ENCODE measurements at regions of chr3 and their contacts with region 1.

Region 1: DNA sequence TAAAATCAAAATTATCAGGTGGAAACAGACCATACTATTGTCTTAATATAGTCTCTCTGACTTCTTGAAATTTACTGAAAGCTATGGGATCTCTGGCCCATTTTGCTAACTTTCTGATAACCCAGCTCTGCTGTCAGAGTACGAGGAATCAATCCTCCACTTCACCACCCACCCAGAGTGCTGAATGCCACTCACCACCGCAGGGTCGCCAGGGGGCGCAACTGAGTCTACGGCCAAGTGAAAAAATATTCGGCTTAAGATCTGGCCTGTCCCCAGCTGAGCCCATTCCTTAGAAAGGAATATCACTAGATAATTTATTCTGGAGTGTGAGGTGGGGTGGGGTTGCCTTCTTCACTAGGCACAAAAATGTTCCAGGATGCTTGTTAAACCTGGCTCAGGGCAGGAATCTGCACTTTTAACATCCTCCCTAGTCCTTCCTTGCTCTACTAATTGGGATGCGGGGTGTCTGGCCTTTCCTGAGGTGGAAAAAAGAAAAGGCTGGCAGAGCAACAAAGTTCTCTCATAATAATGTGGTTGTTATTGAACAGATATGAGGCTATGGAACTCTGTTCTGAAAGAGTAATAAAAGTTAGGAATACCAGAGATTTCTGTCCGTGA is 520.6 kb downstream of the MFSD1 start:
- DNase-seq: peak; percentile 83
- ATAC-seq: peak; percentile 99
- H3K4me3 Mint-ChIP-seq: no peak overlapping the region
- H3K27ac Mint-ChIP-seq: no peak overlapping the region
- H3K4me1 Mint-ChIP-seq: no peaks in the 10 kb centered on the region
- H3K27me3 Mint-ChIP-seq: no peaks in the 10 kb centered on the region
- CTCF ChIP-seq: peak; percentile 91

Region 2: GRCh38 chr3:159266779-159267178 is 55.7 kb before region 1 on chr3:
- CTCF ChIA-PET with region 1: interaction called, 12 read pairs
- POLR2A ChIA-PET with region 1: no interaction called
- DNase-seq: peak; percentile 74
- ATAC-seq: peak; percentile 97
- H3K4me3 Mint-ChIP-seq: no peak overlapping the region
- H3K27ac Mint-ChIP-seq: no peak overlapping the region
- H3K4me1 Mint-ChIP-seq: no peaks in the 10 kb centered on the region
- H3K27me3 Mint-ChIP-seq: no peaks in the 10 kb centered on the region
- CTCF ChIP-seq: peak; percentile 60

Region 3: DNA sequence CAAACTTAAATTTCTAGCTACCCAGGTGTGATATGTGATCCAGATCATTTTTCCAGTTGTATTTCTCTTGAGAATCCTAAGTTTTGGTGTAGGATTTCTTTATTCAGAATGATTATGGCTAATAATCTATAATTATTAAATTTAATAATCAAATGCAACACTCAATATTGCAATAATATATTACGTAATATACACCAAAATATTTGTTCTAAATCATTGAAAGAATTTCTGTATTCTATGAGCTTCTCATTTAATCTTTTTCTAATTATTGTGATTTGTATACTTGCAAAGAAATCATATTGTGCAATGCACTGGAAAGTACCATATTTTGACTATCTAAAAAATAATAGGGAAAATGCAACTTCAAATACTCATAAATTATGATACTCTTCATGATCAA is 11.0 kb before region 1 on chr3:
- CTCF ChIA-PET with region 1: interaction called, 26 read pairs
- POLR2A ChIA-PET with region 1: no interaction called
- DNase-seq: no peak
- ATAC-seq: no peak
- H3K4me3 Mint-ChIP-seq: no peak overlapping the region
- H3K27ac Mint-ChIP-seq: no peak overlapping the region
- H3K4me1 Mint-ChIP-seq: no peaks in the 10 kb centered on the region
- H3K27me3 Mint-ChIP-seq: no peaks in the 10 kb centered on the region
- CTCF ChIP-seq: no peak

Region 4: DNA sequence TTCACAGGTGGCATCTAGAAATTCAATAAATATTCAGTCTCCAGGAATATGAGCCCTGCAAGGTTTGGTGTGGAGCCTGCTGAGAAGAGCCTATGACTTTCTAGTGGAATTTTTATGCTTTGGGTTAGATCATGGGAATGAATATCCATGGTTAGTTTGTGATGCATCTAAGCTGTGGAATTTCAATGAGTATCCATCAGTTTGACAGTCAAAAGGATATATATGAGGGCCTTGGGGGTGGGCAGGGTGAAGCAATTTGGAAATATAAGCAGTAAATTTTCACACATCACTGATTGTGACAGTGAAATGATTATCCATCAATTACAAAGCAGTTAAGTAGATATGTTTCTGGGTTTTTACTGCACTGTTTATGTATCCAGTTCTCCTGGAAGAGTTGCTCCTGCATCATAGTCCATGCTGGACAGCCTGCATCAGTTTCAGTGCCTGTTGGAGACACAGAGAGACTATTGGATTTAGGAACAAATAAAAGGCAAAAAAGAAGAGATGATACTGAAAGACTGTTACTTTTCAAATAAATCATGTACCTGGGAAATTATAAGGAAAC is 10.2 kb after region 1 on chr3:
- CTCF ChIA-PET with region 1: interaction called, 14 read pairs
- POLR2A ChIA-PET with region 1: no interaction called
- DNase-seq: no peak
- ATAC-seq: no peak
- H3K4me3 Mint-ChIP-seq: no peak overlapping the region
- H3K27ac Mint-ChIP-seq: no peak overlapping the region
- H3K4me1 Mint-ChIP-seq: no peaks in the 10 kb centered on the region
- H3K27me3 Mint-ChIP-seq: no peaks in the 10 kb centered on the region
- CTCF ChIP-seq: no peak

Region 5: GRCh38 chr3:159443266-159443665 is 120.8 kb after region 1 on chr3:
- CTCF ChIA-PET with region 1: no interaction called
- POLR2A ChIA-PET with region 1: no interaction called
- DNase-seq: no peak
- ATAC-seq: no peak
- H3K4me3 Mint-ChIP-seq: no peak overlapping the region
- H3K27ac Mint-ChIP-seq: no peak overlapping the region
- H3K4me1 Mint-ChIP-seq: no peaks in the 10 kb centered on the region; the same call in 1 of the 2 replicates
- H3K27me3 Mint-ChIP-seq: no peaks in the 10 kb centered on the region; the same call in 1 of the 2 replicates
- CTCF ChIP-seq: no peak

Region 6: DNA sequence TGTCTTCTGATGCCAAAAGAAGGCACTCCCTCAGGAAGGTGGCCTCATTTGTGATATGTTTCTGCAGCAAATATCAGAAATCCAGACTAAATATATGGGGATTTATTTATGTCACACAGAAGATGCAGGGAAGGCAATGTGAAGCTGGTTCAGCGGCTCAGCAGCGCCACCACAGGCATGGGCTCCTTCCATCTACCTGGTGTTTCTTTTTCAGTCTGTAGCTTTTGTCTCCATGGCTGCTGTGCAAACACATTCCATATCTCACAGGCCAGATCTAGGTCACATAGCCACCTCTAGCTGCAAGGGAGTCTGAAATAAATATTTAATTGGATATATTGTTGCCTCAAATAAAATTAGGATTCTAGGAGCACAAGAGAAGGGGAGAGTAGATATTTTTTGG is 164.2 kb after region 1 on chr3:
- CTCF ChIA-PET with region 1: interaction called, 15 read pairs
- POLR2A ChIA-PET with region 1: no interaction called
- DNase-seq: peak; percentile 65
- ATAC-seq: peak; percentile 91
- H3K4me3 Mint-ChIP-seq: no peak overlapping the region
- H3K27ac Mint-ChIP-seq: no peak overlapping the region
- H3K4me1 Mint-ChIP-seq: peaks cover 24% of the 10 kb centered on the region
- H3K27me3 Mint-ChIP-seq: peaks cover 5% of the 10 kb centered on the region
- CTCF ChIP-seq: 0 out of 2 replicates have a peak, but pooled peaks have one; percentile 30

Region 7: DNA sequence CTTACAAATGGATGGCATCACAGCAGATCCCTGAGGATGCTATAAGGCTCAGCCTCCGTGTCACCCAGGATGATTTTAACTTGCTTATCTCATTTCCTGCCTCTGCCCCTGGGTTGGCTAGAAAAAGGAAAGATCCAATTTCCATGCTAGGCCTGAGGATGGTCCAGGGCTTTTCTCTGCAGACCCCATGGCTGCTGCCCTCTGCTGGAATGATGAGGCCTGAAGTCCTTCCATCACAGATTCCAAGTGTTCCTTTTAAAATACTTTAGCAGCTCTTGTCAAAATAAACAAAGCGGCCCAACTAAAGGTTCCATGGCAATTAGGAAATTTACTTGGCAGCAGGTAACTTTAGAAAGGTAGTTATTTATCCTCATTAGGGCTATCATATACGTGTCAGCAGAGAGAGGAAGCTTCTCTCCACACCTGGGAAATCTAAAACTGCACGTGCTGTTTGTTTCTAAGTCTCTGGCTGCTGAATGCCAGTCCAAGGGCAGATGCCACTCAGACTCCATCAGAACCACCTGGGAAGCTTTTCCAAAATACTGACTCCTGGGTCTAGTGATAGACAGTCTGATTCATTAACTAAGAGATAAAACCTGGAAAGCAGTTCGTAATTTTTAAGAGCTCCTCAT is 264.3 kb after region 1 on chr3:
- CTCF ChIA-PET with region 1: interaction called, 17 read pairs
- POLR2A ChIA-PET with region 1: no interaction called
- DNase-seq: peak; percentile 66
- ATAC-seq: peak; percentile 99
- H3K4me3 Mint-ChIP-seq: no peak overlapping the region
- H3K27ac Mint-ChIP-seq: no peak overlapping the region
- H3K4me1 Mint-ChIP-seq: peaks cover 8% of the 10 kb centered on the region
- H3K27me3 Mint-ChIP-seq: no peaks in the 10 kb centered on the region
- CTCF ChIP-seq: peak; percentile 58

Region 8: GRCh38 chr3:159804726-159805410 is 482.4 kb after region 1 on chr3:
- CTCF ChIA-PET with region 1: interaction called, 10 read pairs
- POLR2A ChIA-PET with region 1: no interaction called
- DNase-seq: peak; percentile 70
- ATAC-seq: peak; percentile 100
- H3K4me3 Mint-ChIP-seq: no peak overlapping the region
- H3K27ac Mint-ChIP-seq: no peak overlapping the region
- H3K4me1 Mint-ChIP-seq: peaks cover 6% of the 10 kb centered on the region
- H3K27me3 Mint-ChIP-seq: peaks cover 41% of the 10 kb centered on the region
- CTCF ChIP-seq: peak; percentile 48